B cell (primary cell): ENCODE measurements at regions of chr19 and their contacts with region 1.

Region 1: GRCh38 chr19:46016426-46017094 is 6.3 kb downstream of the PGLYRP1 start:
- DNase-seq: peak; percentile 85
- ATAC-seq: peak; percentile 85
- H3K4me3 ChIP-seq: peak overlapping the region; percentile 65 to 81 (median 76)
- H3K4me3 Mint-ChIP-seq: peak overlapping the region; percentile 94
- H3K27ac ChIP-seq: no peak overlapping the region
- H3K27ac Mint-ChIP-seq: peak overlapping the region; percentile 69
- H3K4me1 ChIP-seq: peaks cover 19 to 22% of the 10 kb centered on the region in 2 donors
- H3K4me1 Mint-ChIP-seq: peaks cover 18% of the 10 kb centered on the region
- H3K27me3 ChIP-seq: peaks cover 0 to 21% (median 7%) of the 10 kb centered on the region in 4 experiments
- H3K27me3 Mint-ChIP-seq: peaks cover 18% of the 10 kb centered on the region
- CTCF ChIP-seq: peak; percentile 83

Region 2: DNA sequence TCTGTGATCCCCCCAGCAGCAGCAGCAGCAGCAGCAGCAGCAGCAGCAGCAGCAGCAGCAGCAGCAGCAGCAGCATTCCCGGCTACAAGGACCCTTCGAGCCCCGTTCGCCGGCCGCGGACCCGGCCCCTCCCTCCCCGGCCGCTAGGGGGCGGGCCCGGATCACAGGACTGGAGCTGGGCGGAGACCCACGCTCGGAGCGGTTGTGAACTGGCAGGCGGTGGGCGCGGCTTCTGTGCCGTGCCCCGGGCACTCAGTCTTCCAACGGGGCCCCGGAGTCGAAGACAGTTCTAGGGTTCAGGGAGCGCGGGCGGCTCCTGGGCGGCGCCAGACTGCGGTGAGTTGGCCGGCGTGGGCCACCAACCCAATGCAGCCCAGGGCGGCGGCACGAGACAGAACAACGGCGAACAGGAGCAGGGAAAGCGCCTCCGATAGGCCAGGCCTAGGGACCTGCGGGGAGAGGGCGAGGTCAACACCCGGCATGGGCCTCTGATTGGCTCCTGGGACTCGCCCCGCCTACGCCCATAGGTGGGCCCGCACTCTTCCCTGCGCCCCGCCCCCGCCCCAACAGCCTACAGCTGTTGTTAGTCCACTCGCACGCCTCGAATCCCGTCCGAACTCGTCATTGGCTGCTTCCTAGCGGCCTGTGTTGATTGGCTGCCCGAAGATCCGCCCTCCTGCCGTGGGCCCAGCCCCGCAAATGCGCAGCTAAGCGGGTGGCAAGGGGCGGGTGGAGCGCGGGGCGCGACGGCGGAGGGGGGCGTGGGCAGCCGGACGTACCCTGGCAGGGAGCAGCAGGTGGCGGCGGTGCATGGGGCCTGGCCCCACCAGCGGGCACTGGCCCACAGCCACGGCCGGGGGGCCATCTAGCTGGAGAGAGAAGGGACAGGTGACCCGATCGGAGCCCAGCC is 246.1 kb before region 1 on chr19:
- CTCF ChIA-PET with region 1: interaction called, 11 read pairs
- POLR2A ChIA-PET with region 1: interaction called, 3 read pairs
- intact Hi-C with region 1: loop called (anchors 1 kb)
- DNase-seq: peak; percentile 95
- ATAC-seq: peak; percentile 68
- H3K4me3 ChIP-seq: peak overlapping the region in 4 of 5 experiments; percentile 71 to 88 (median 82)
- H3K4me3 Mint-ChIP-seq: peak overlapping the region; percentile 90
- H3K27ac ChIP-seq: peak overlapping the region; percentile 29 to 56
- H3K27ac Mint-ChIP-seq: peak overlapping the region; percentile 86
- H3K4me1 ChIP-seq: peaks cover 12 to 32% of the 10 kb centered on the region in 2 donors
- H3K4me1 Mint-ChIP-seq: peaks cover 29% of the 10 kb centered on the region
- H3K27me3 ChIP-seq: peaks cover 0 to 28% (median 8%) of the 10 kb centered on the region in 4 experiments
- H3K27me3 Mint-ChIP-seq: no peaks in the 10 kb centered on the region
- CTCF ChIP-seq: peak; percentile 96

Region 3: GRCh38 chr19:45817010-45817724 is 199.4 kb before region 1 on chr19:
- CTCF ChIA-PET with region 1: interaction called, 3 read pairs
- POLR2A ChIA-PET with region 1: no interaction called
- intact Hi-C with region 1: loop called (anchors 2 kb)
- DNase-seq: peak; percentile 96
- ATAC-seq: peak; percentile 100
- H3K4me3 ChIP-seq: no peak overlapping the region
- H3K4me3 Mint-ChIP-seq: peak overlapping the region; percentile 54
- H3K27ac ChIP-seq: no peak overlapping the region
- H3K27ac Mint-ChIP-seq: peak overlapping the region; percentile 75
- H3K4me1 ChIP-seq: peaks cover 19 to 23% of the 10 kb centered on the region in 2 donors
- H3K4me1 Mint-ChIP-seq: peaks cover 11% of the 10 kb centered on the region
- H3K27me3 ChIP-seq: peaks cover 0 to 6% (median 2%) of the 10 kb centered on the region in 4 experiments
- H3K27me3 Mint-ChIP-seq: peaks cover 3% of the 10 kb centered on the region
- CTCF ChIP-seq: peak; percentile 97

Region 4: DNA sequence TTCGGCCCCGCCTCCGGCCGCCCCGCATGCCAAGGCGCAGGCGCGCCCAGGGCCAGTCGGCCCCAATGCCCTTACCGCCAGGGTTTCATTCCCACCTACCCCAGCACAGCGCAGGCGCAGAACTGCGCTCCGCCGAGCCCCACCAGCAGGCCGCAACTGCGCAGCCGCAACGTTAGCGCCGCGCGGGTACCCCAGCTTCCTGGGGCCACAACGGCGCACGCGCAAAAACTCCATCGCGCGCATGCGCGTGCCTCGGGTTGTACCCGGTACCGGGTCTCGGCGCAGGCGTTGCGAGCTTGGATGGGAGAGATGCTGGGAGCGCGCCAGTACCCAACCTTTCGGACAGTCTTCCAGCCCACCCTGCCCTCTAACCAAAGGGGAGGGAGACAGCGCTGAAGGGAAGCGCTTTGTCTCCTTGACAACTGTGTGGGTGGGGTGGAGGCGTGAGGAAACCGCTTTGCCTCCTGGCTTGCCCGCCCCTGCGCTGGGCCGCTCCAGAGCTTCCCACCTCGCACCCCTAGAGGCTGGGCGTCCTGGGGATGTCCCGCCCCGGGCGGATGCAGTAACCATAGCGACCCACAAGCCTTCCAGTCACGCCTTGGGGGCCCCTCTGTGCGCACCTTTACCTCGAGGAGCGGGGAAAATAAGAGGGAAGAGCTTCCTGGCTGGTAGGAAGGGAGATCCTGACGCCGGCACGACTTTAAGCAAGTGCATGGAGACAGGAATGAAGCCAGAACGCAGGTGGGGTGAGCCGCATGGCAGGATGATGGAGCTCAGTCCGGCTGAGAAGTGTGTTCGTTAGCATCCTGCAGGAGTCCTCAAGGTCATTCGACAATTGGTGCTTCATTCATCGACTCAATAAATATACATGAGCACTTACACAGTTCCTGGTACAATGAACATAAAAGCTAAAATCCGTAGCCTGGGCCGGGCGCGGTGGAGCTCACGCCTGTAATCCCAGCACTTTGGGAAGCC is 113.6 kb before region 1 on chr19:
- CTCF ChIA-PET with region 1: no interaction called
- POLR2A ChIA-PET with region 1: no interaction called
- intact Hi-C with region 1: loop called (anchors 1 kb)
- DNase-seq: peak; percentile 100
- ATAC-seq: peak; percentile 83
- H3K4me3 ChIP-seq: peak overlapping the region; percentile 68 to 88 (median 74)
- H3K4me3 Mint-ChIP-seq: peak overlapping the region; percentile 89
- H3K27ac ChIP-seq: peak overlapping the region; percentile 64 to 70
- H3K27ac Mint-ChIP-seq: peak overlapping the region; percentile 95
- H3K4me1 ChIP-seq: peaks cover 16 to 21% of the 10 kb centered on the region in 2 donors
- H3K4me1 Mint-ChIP-seq: peaks cover 32% of the 10 kb centered on the region
- H3K27me3 ChIP-seq: no peaks in the 10 kb centered on the region
- H3K27me3 Mint-ChIP-seq: no peaks in the 10 kb centered on the region
- CTCF ChIP-seq: no peak

Region 5: GRCh38 chr19:45927565-45928261 is 88.8 kb before region 1 on chr19:
- CTCF ChIA-PET with region 1: no interaction called
- POLR2A ChIA-PET with region 1: no interaction called
- intact Hi-C with region 1: loop called (anchors 1 kb)
- DNase-seq: peak; percentile 93
- ATAC-seq: peak; percentile 99
- H3K4me3 ChIP-seq: no peak overlapping the region
- H3K4me3 Mint-ChIP-seq: peak overlapping the region; percentile 32
- H3K27ac ChIP-seq: no peak overlapping the region
- H3K27ac Mint-ChIP-seq: no peak overlapping the region
- H3K4me1 ChIP-seq: peaks cover 7 to 8% of the 10 kb centered on the region in 2 donors
- H3K4me1 Mint-ChIP-seq: peaks cover 8% of the 10 kb centered on the region
- H3K27me3 ChIP-seq: peaks cover 0 to 8% (median 1%) of the 10 kb centered on the region in 4 experiments
- H3K27me3 Mint-ChIP-seq: peaks cover 11% of the 10 kb centered on the region
- CTCF ChIP-seq: no peak

Region 6: DNA sequence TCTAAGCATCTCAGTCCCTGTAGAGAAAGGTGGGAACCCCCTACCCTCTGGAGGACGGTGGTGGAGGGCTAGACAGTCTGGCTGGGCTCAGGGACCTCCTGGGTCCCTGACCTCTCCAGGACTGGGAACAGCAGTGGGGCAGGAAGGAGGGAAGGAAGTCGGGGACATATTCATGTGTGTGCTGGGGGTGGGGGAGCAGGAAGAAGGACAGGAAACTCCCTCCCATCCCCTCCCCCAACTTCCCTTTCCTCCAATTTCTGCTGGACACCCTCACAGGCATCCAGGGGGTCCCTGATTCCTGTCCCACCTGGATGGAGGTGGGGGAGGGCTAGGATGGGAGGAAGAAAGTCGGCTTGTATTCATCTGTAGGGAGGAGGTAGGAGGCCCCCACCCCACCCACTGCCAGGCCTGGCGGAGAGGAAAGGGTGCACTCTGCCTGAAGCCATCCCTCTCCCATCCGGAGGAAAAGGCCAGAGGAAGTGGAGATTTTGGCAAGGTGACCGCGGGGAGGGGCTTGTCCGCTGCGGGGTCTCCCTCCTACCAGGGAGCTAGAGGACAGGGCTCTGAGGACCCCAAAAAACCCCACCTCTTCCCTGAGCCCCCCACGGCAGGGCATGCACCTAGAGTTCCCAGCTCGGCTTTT is 45.2 kb before region 1 on chr19:
- CTCF ChIA-PET with region 1: no interaction called
- POLR2A ChIA-PET with region 1: no interaction called
- intact Hi-C with region 1: no loop called
- DNase-seq: peak; percentile 30
- ATAC-seq: no peak
- H3K4me3 ChIP-seq: no peak overlapping the region
- H3K4me3 Mint-ChIP-seq: peak overlapping the region; percentile 66
- H3K27ac ChIP-seq: no peak overlapping the region
- H3K27ac Mint-ChIP-seq: no peak overlapping the region
- H3K4me1 ChIP-seq: peaks cover 26 to 30% of the 10 kb centered on the region in 2 donors
- H3K4me1 Mint-ChIP-seq: peaks cover 18% of the 10 kb centered on the region
- H3K27me3 ChIP-seq: peaks cover 0 to 60% (median 37%) of the 10 kb centered on the region in 4 experiments
- H3K27me3 Mint-ChIP-seq: peaks cover 68% of the 10 kb centered on the region
- CTCF ChIP-seq: no peak

Region 7: GRCh38 chr19:45994989-45995714 is 21.4 kb before region 1 on chr19 and contains the start of gene CCDC61:
- CTCF ChIA-PET with region 1: interaction called, 20 read pairs
- POLR2A ChIA-PET with region 1: interaction called, 5 read pairs
- intact Hi-C with region 1: loop called (anchors 1 kb)
- DNase-seq: peak; percentile 99
- ATAC-seq: peak; percentile 93
- H3K4me3 ChIP-seq: peak within 1 kb of the TSS; percentile 71 to 92 (median 78)
- H3K4me3 Mint-ChIP-seq: peak within 1 kb of the TSS; percentile 58
- H3K27ac ChIP-seq: peak within 1 kb of the TSS; percentile 55 to 84
- H3K27ac Mint-ChIP-seq: no peak within 1 kb of the TSS
- H3K4me1 ChIP-seq: peaks cover 19 to 21% of the 10 kb centered on the region in 2 donors
- H3K4me1 Mint-ChIP-seq: peaks cover 27% of the 10 kb centered on the region
- H3K27me3 ChIP-seq: peaks cover 0 to 9% (median 5%) of the 10 kb centered on the region in 4 experiments
- H3K27me3 Mint-ChIP-seq: peaks cover 21% of the 10 kb centered on the region
- CTCF ChIP-seq: no peak
- total RNA-seq, gene CCDC61: 30.1 and 37.0 TPM in 2 replicates

Region 8: GRCh38 chr19:46201413-46202310 is 185.1 kb after region 1 on chr19:
- CTCF ChIA-PET with region 1: no interaction called
- POLR2A ChIA-PET with region 1: no interaction called
- intact Hi-C with region 1: no loop called
- DNase-seq: no peak
- ATAC-seq: no peak
- H3K4me3 ChIP-seq: no peak overlapping the region
- H3K4me3 Mint-ChIP-seq: no peak overlapping the region
- H3K27ac ChIP-seq: no peak overlapping the region
- H3K27ac Mint-ChIP-seq: no peak overlapping the region
- H3K4me1 ChIP-seq: no peaks in the 10 kb centered on the region
- H3K4me1 Mint-ChIP-seq: no peaks in the 10 kb centered on the region
- H3K27me3 ChIP-seq: peaks cover 0 to 8% (median 0%) of the 10 kb centered on the region in 4 experiments
- H3K27me3 Mint-ChIP-seq: peaks cover 52% of the 10 kb centered on the region
- CTCF ChIP-seq: no peak

Region 9: DNA sequence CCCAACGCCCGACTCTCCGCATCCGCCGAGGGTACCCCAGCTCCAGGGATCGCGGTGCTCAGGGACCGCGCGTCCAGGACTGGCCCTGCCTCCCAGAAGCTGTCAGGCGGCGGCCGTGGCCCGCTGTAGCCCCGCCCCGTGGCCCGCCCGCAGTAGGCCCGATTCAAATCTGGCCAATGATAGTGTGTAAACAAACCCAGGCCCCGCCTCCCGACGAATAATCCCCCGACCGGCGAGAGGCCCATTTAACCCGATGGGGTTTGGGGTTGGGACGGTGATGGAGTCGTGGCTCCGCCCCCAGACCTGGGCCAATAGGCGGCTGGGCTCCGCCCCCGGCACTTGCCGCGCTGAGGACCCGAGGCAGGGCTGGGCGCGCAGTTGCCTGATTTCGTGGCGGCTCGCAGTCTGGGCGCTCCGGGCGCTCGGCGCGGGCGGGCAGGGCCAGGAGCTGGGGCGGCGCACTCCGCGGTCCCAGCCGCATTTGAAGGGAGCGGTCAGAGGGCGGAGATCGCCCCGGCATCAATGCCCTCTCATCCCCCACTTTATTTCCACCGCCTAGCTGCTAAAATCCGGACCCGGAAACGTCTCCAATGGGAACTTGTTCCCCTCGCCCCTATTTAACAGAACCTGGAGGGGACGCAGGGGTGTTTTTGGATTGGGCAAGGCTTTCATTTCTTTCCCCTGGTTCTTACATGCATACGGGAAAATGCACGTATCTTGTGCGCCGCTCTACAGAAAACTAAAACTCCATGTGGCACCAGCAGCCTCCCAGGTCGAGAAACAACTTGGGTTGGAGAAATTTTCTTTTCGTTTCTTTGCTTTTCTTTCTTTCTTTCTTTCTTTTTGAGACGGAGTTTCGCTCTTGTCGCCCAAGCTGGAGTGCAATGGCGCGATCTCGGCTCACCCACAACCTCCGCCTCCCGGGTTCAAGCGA is 1584.0 kb after region 1 on chr19:
- CTCF ChIA-PET with region 1: no interaction called
- POLR2A ChIA-PET with region 1: no interaction called
- intact Hi-C with region 1: loop called (anchors 10 kb)
- DNase-seq: peak; percentile 99
- ATAC-seq: peak; percentile 96
- H3K4me3 ChIP-seq: peak overlapping the region; percentile 63 to 79 (median 71)
- H3K4me3 Mint-ChIP-seq: peak overlapping the region; percentile 80
- H3K27ac ChIP-seq: peak overlapping the region; percentile 62 to 83
- H3K27ac Mint-ChIP-seq: peak overlapping the region; percentile 70
- H3K4me1 ChIP-seq: peaks cover 12 to 18% of the 10 kb centered on the region in 2 donors
- H3K4me1 Mint-ChIP-seq: peaks cover 11% of the 10 kb centered on the region
- H3K27me3 ChIP-seq: peaks cover 0 to 28% (median 3%) of the 10 kb centered on the region in 4 experiments
- H3K27me3 Mint-ChIP-seq: peaks cover 21% of the 10 kb centered on the region
- CTCF ChIP-seq: no peak